ENCODE measurements at regions of chr1 and their contacts with region 1.

Region 1: DNA sequence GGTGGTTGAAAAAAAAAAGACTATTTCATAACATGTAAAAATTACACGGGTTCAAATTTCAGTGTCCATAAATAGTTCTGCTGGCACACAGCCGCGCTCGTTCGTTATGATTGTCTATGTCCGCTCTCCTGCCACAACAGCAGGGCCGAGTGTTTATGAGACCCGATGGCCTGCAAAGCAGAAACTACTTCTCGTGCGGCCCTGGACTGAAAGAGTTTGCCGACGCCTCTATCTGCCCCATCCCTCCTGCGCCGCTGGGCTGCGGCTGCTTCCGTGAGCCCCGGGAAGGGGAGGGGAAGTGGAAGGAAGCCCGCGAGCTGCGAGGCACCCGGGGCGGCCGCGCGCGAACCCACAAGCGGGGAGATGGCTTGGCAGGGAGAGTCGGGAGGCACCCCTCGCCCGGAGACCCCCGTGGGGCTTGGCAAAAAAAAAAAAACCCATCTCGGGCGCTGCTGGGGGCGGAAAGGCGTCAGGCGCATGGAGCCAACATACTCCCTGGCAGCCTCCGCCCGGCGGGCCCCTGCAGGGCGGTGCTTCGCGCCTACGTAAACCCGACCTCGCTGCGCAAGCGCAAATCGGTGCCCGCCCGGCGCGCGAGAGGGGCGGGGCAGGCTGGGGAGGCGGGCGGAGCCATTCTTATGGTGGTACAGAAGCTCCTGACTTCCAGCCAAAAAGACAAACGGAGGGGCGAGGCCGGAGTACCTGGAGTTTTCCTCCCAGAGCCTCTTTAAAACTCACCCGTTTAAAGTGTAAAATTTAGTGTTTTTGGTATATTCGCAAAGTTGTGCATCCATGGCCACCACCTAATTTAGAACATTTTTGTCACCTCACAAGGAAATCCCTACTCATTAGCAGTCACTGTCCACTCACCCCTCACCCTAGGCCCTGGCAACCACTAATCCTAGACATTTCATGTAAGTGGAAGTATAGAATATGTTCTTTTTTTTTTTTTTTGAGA is 8.3 kb downstream of the SLC27A3 start:
- DNase-seq: peak; percentile 95
- ATAC-seq: peak; percentile 97
- H3K4me3 ChIP-seq: peak overlapping the region; percentile 44 to 89 (median 76)
- H3K4me3 Mint-ChIP-seq: peak overlapping the region; percentile 97
- H3K27ac ChIP-seq: peak overlapping the region; percentile 94 to 95
- H3K27ac Mint-ChIP-seq: peak overlapping the region; percentile 93
- H3K4me1 ChIP-seq: peaks cover 7 to 23% of the 10 kb centered on the region in 2 donors
- H3K4me1 Mint-ChIP-seq: peaks cover 18% of the 10 kb centered on the region
- H3K27me3 ChIP-seq: no peaks in the 10 kb centered on the region
- H3K27me3 Mint-ChIP-seq: no peaks in the 10 kb centered on the region
- CTCF ChIP-seq: no peak

Region 2: DNA sequence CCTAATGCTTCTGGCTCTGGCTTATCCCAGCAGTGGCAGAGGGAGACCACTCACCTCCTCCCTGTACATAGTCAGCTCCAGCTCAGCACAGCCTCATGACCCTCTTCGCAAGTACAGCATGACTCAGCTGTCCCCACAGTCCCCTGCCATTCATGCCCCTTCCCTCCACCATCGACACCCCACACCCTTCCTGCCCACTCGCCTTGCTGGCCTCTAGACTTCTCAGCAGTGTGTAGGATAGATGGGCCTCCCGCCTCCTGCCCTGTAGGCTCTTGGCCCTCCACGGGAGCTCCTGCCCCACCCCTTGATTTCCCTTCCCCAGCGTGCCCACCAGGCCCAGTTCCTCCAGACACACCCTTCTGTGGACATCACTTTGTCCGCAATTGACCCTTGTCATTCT is 95.2 kb before region 1 on chr1:
- CTCF ChIA-PET with region 1: no interaction called
- POLR2A ChIA-PET with region 1: no interaction called
- intact Hi-C with region 1: no loop called
- DNase-seq: no peak
- ATAC-seq: no peak
- H3K4me3 ChIP-seq: no peak overlapping the region
- H3K4me3 Mint-ChIP-seq: no peak overlapping the region
- H3K27ac ChIP-seq: no peak overlapping the region
- H3K27ac Mint-ChIP-seq: no peak overlapping the region
- H3K4me1 ChIP-seq: no peaks in the 10 kb centered on the region
- H3K4me1 Mint-ChIP-seq: peaks cover 5% of the 10 kb centered on the region
- H3K27me3 ChIP-seq: peaks cover 0 to 7% (median 0%) of the 10 kb centered on the region in 4 experiments
- H3K27me3 Mint-ChIP-seq: peaks cover 26% of the 10 kb centered on the region
- CTCF ChIP-seq: no peak

Region 3: DNA sequence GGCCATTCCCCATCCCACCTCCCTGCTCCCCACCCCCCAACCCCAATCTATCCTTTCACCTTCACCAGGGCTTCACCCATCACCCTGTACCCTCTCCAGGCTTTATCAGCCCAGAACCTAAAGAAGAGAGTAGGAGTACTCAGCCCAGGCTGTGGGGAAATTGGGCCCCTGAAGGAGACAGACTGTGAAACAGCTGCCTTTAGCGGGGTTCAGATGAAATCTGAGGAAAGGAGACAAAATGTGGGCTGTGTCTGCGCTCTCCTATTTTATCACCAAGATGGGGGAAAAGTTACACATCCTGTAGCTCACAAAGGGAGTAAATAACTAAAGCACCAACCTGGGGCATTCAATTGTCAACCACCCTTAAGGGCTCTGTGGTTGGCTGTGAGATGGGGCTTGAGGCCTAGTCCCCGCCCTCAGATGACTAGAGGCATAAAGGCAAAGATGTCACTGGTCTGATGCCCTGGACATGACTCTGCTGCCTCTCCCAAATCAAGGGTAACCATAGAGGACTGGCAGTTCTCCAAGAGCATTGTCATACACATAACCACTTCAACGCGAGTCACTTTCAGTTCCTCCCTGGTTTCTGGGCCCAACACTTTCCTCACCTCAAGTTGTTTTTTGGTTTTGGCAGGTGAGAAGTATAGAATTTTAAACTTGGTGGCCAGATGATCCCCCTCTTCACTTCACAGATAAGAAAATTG is 21.7 kb after region 1 on chr1:
- CTCF ChIA-PET with region 1: no interaction called
- POLR2A ChIA-PET with region 1: no interaction called
- intact Hi-C with region 1: loop called (anchors 2 kb)
- DNase-seq: peak; percentile 91
- ATAC-seq: peak; percentile 98
- H3K4me3 ChIP-seq: no peak overlapping the region
- H3K4me3 Mint-ChIP-seq: peak overlapping the region; percentile 21
- H3K27ac ChIP-seq: peak overlapping the region; percentile 82 to 88
- H3K27ac Mint-ChIP-seq: peak overlapping the region; percentile 81
- H3K4me1 ChIP-seq: peaks cover 22 to 33% of the 10 kb centered on the region in 2 donors
- H3K4me1 Mint-ChIP-seq: peaks cover 30% of the 10 kb centered on the region
- H3K27me3 ChIP-seq: no peaks in the 10 kb centered on the region
- H3K27me3 Mint-ChIP-seq: no peaks in the 10 kb centered on the region
- CTCF ChIP-seq: no peak

Measured in B cell (primary cell).